ENCODE measurements at regions of chr9 and their contacts with region 1.

Region 1: GRCh38 chr9:109012876-109013678 is at the start of gene CTNNAL1:
- DNase-seq: peak; percentile 91
- ATAC-seq: peak; percentile 79
- H3K4me3 Mint-ChIP-seq: peak within 1 kb of the TSS; percentile 87
- H3K27ac Mint-ChIP-seq: peak within 1 kb of the TSS; percentile 82
- H3K4me1 Mint-ChIP-seq: peaks cover 32% of the 10 kb centered on the region
- H3K27me3 Mint-ChIP-seq: no peaks in the 10 kb centered on the region
- total RNA-seq, gene CTNNAL1: 13.0 to 16.4 TPM

Region 2: GRCh38 chr9:107243751-107244150 is 1769.3 kb before region 1 on chr9:
- CTCF ChIA-PET with region 1: no interaction called
- POLR2A ChIA-PET with region 1: no interaction called
- intact Hi-C with region 1: loop called in 1 of 2 experiments (anchors 5 kb)
- DNase-seq: peak; percentile 74
- ATAC-seq: peak; percentile 92
- H3K4me3 Mint-ChIP-seq: no peak overlapping the region
- H3K27ac Mint-ChIP-seq: peak overlapping the region; percentile 84
- H3K4me1 Mint-ChIP-seq: peaks cover 32% of the 10 kb centered on the region
- H3K27me3 Mint-ChIP-seq: peaks cover 2% of the 10 kb centered on the region

Region 3: GRCh38 chr9:107489687-107490605 is 1523.1 kb before region 1 on chr9 and contains the start of gene KLF4:
- CTCF ChIA-PET with region 1: no interaction called
- POLR2A ChIA-PET with region 1: no interaction called
- intact Hi-C with region 1: loop called in 1 of 2 experiments (anchors 5 kb)
- DNase-seq: peak; percentile 89
- ATAC-seq: peak; percentile 84
- H3K4me3 Mint-ChIP-seq: peak within 1 kb of the TSS; percentile 65
- H3K27ac Mint-ChIP-seq: no peak within 1 kb of the TSS
- H3K4me1 Mint-ChIP-seq: peaks cover 20% of the 10 kb centered on the region
- H3K27me3 Mint-ChIP-seq: peaks cover 58% of the 10 kb centered on the region
- total RNA-seq, gene KLF4: 0.88 to 1.2 TPM

Region 4: GRCh38 chr9:108933718-108934322 is 79.3 kb before region 1 on chr9 and contains the start of gene ELP1:
- CTCF ChIA-PET with region 1: no interaction called
- POLR2A ChIA-PET with region 1: no interaction called
- intact Hi-C with region 1: loop called (anchors 1 kb)
- DNase-seq: peak; percentile 96
- ATAC-seq: peak; percentile 88
- H3K4me3 Mint-ChIP-seq: peak within 1 kb of the TSS; percentile 98
- H3K27ac Mint-ChIP-seq: peak within 1 kb of the TSS; percentile 95
- H3K4me1 Mint-ChIP-seq: peaks cover 29% of the 10 kb centered on the region
- H3K27me3 Mint-ChIP-seq: no peaks in the 10 kb centered on the region
- total RNA-seq, gene ELP1: 31.1 to 58.0 TPM

Region 5: GRCh38 chr9:109110326-109111021 is 97.4 kb after region 1 on chr9:
- CTCF ChIA-PET with region 1: no interaction called
- POLR2A ChIA-PET with region 1: no interaction called
- intact Hi-C with region 1: loop called in 1 of 2 experiments (anchors 1 kb)
- DNase-seq: no peak
- ATAC-seq: peak; percentile 64
- H3K4me3 Mint-ChIP-seq: peak overlapping the region; percentile 47
- H3K27ac Mint-ChIP-seq: peak overlapping the region; percentile 82
- H3K4me1 Mint-ChIP-seq: peaks cover 89% of the 10 kb centered on the region
- H3K27me3 Mint-ChIP-seq: no peaks in the 10 kb centered on the region

Region 6: DNA sequence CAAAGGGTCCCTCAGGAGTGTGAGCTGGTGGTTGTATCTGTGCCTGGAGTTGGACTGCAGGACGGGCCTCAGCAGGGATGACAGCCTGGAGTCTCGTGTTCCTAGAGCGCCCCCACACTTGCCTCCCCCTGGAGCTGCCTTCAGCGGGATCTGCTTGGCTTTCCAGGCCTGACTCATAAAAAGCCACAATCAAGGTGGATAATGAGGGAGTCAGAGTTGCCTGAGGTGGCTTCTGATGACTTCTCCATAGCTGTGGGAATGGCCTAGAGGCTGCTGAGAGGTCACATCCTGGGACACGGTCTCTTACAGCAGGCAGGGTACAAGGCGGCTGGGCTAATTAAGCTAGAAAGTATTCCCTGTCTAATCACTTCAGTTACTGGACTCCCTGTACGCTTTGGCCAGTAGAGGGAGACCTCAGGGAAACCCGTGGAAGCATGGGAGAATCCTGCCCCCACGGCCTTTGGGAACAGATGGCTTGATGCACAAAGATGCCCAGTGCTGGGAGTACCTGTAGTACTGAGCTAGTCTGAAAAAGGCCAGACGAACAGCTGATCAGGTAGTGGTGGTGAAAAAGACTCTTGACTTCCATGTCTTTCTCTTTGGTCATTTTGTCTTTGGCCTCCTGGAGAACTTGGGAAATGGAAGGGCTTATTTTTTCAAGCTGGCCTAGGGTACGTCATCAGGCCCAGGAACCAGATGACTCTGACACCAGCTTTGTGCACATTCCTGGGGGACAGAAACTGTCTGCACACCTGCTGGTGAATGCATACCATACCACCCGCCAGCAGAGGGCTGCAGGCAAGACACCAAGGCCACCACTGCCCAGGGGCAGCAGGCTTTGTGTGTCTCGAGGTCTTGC is 170.1 kb after region 1 on chr9:
- CTCF ChIA-PET with region 1: interaction called, 3 read pairs
- POLR2A ChIA-PET with region 1: interaction called, 3 read pairs
- intact Hi-C with region 1: loop called (anchors 5 kb)
- DNase-seq: peak; percentile 48
- ATAC-seq: no peak
- H3K4me3 Mint-ChIP-seq: no peak overlapping the region
- H3K27ac Mint-ChIP-seq: no peak overlapping the region
- H3K4me1 Mint-ChIP-seq: peaks cover 13% of the 10 kb centered on the region
- H3K27me3 Mint-ChIP-seq: peaks cover 14% of the 10 kb centered on the region

Region 7: GRCh38 chr9:109411798-109412352 is 398.8 kb after region 1 on chr9:
- CTCF ChIA-PET with region 1: no interaction called
- POLR2A ChIA-PET with region 1: no interaction called
- intact Hi-C with region 1: loop called in 1 of 2 experiments (anchors 5 kb)
- DNase-seq: peak; percentile 66
- ATAC-seq: peak; percentile 57
- H3K4me3 Mint-ChIP-seq: no peak overlapping the region
- H3K27ac Mint-ChIP-seq: peak overlapping the region; percentile 67
- H3K4me1 Mint-ChIP-seq: peaks cover 42% of the 10 kb centered on the region
- H3K27me3 Mint-ChIP-seq: peaks cover 17% of the 10 kb centered on the region

Measured in activated CD4-positive, alpha-beta T cell treated with anti-CD3 and anti-CD28 coated beads for 36 hours (primary cell).